ENCODE measurements at regions of chr5 and their contacts with region 1.

Region 1: DNA sequence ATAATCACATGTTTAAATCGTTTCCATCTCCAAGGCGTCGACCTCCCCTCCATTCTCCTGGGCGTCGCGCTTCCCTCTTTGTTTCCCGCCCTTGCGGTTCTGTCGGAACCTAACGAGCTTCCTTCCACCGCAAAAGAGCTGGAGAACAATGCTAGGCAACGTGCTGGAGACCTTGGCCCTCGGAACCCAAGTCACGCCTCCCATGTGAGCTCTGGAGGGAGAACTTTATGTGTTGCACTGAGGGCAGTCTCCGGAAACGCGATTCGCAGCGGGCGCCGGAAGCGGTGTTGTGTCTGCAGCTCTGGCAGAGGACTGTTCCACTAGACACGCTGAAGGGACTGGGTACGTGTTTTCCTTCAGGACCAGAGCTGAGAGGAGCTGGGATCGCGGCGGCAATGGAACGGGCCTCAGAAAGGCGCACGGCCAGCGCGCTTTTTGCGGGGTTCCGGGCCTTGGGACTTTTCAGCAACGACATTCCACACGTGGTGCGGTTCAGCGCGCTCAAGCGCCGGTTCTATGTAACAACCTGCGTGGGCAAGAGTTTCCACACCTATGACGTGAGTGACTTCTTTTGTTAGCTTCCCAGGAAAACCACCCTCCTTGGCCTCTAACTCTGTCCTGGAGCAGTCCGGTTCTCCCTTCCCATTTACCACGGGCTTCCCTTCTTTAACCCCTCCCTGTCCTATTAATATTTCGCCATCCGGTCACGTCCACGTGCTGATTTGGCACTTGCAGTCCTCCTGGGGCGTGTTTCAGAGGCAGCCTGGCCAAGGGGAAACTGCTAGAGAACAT is at the start of gene WDR36:
- DNase-seq: peak; percentile 90
- H3K4me3 ChIP-seq: peak within 1 kb of the TSS; percentile 77 to 98 (median 96)
- H3K27ac ChIP-seq: peak within 1 kb of the TSS; percentile 60
- H3K4me1 ChIP-seq: peaks cover 15% of the 10 kb centered on the region
- H3K27me3 ChIP-seq: no peaks in the 10 kb centered on the region
- CTCF ChIP-seq: no peak
- total RNA-seq, gene WDR36: 45.5 to 67.2 TPM

Region 2: DNA sequence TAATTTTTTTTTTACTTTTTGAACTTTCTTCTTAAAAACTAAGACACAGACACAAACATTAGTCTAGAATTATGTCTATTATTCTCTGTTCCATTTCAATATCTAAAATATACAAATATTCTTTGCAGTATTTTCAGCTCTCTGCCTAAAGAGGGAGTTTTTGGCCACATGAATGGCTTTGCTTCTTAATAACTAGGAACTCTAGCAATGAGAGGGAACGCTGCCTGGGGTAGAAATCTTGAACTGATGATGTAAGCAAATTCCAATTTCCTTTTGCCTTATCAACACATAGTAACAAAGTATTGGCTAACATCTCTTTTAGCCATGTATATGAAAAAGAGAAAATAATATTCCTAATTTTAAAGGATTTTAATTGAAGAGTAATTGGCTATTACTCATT is 301.6 kb before region 1 on chr5:
- CTCF ChIA-PET with region 1: no interaction called
- dilution Hi-C with region 1: no loop called
- in situ Hi-C with region 1: no loop called
- intact Hi-C with region 1: loop called (anchors 2 kb)
- DNase-seq: peak; percentile 20
- H3K4me3 ChIP-seq: no peak overlapping the region
- H3K27ac ChIP-seq: no peak overlapping the region
- H3K4me1 ChIP-seq: peaks cover under 1% of the 10 kb centered on the region
- H3K27me3 ChIP-seq: no peaks in the 10 kb centered on the region
- CTCF ChIP-seq: peak in 1 of 2 donors; percentile 52

Region 3: GRCh38 chr5:110899566-110900412 is 192.5 kb before region 1 on chr5:
- CTCF ChIA-PET with region 1: no interaction called
- dilution Hi-C with region 1: no loop called
- in situ Hi-C with region 1: no loop called
- intact Hi-C with region 1: loop called (anchors 2 kb)
- DNase-seq: peak; percentile 65
- H3K4me3 ChIP-seq: no peak overlapping the region
- H3K27ac ChIP-seq: peak overlapping the region; percentile 40
- H3K4me1 ChIP-seq: peaks cover 19% of the 10 kb centered on the region
- H3K27me3 ChIP-seq: no peaks in the 10 kb centered on the region
- CTCF ChIP-seq: no peak

Region 4: DNA sequence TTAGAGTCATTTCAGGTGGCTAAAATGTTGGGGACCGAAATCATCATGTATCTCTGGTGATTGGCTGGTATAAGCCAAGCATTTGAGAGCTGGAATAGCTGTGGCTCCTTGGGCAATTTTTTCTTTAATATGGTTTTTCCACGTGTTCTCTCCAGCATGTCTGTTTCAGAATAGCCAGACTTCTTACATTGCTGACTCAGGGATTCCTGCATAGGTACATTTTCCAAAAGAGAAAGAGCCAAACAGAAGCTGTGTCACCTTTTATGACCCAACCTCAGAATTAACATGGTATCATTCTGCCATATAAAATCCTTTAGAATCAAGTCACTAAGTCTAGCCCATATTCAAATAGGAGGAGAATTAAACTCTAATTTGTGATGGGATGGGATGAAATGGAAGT is 95.5 kb before region 1 on chr5:
- CTCF ChIA-PET with region 1: no interaction called
- dilution Hi-C with region 1: no loop called
- in situ Hi-C with region 1: no loop called
- intact Hi-C with region 1: no loop called
- DNase-seq: no peak
- H3K4me3 ChIP-seq: no peak overlapping the region
- H3K27ac ChIP-seq: no peak overlapping the region
- H3K4me1 ChIP-seq: no peaks in the 10 kb centered on the region
- H3K27me3 ChIP-seq: no peaks in the 10 kb centered on the region
- CTCF ChIP-seq: no peak

Region 5: DNA sequence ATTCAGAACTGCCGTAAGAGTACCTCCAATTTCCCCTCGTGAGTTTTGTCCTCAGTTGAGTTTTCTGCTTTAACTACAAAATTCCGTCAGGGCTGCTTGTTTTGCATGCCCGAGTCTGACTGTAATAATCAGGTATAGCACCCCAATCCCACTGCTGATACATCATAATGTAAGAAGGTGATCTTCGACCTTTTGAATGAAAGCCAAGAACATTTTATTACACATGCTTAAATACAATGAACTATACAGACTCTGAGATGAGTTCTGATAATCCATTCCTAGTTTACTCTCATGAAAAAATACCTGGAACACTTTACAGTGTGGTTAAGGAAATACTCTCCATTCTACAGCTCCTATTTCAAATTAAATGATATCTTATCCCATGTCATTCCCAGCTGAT is 70.0 kb before region 1 on chr5:
- CTCF ChIA-PET with region 1: no interaction called
- dilution Hi-C with region 1: no loop called
- in situ Hi-C with region 1: no loop called
- intact Hi-C with region 1: no loop called
- DNase-seq: no peak
- H3K4me3 ChIP-seq: no peak overlapping the region
- H3K27ac ChIP-seq: no peak overlapping the region
- H3K4me1 ChIP-seq: no peaks in the 10 kb centered on the region
- H3K27me3 ChIP-seq: peaks cover 2% of the 10 kb centered on the region
- CTCF ChIP-seq: no peak

Region 6: DNA sequence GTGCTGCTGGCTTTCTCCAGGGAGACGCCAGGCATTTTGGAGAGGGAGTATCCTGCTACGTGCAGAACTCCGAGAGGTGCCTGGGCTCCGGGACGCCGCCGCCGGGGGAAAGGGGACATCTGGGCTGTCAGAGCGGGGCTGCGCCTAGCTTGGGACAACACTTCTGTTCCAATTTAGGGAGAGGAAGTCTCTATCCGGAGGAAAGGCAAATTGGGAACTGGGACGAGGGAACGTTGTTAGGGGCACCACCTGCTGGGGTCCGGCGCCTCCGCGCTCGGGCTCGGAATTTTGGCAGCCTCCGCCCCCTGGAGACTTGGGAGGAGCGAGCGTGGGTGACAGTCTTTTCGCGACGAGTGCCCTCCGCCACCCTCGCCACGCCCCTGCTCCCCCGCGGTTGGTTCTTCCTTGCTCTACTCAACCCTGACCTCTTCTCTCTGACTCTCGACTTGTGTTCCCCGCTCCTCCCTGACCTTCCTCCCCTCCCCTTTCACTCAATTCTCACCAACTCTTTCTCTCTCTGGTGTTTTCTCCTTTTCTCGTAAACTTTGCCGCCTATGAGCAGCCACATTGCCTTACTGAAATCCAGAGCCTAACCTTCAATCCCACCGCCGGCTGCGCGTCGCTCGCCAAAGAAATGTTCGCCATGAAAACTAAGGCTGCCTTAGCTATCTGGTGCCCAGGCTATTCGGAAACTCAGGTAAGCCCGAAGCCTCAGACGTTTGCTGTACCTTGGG is 19.1 kb before region 1 on chr5:
- CTCF ChIA-PET with region 1: no interaction called
- dilution Hi-C with region 1: no loop called
- in situ Hi-C with region 1: no loop called
- intact Hi-C with region 1: loop called (anchors 1 kb)
- DNase-seq: peak; percentile 41
- H3K4me3 ChIP-seq: peak overlapping the region; percentile 64 to 93 (median 66)
- H3K27ac ChIP-seq: no peak overlapping the region
- H3K4me1 ChIP-seq: peaks cover 22% of the 10 kb centered on the region
- H3K27me3 ChIP-seq: peaks cover 4% of the 10 kb centered on the region
- CTCF ChIP-seq: peak in 1 of 2 donors; percentile 29

Region 7: GRCh38 chr5:111107371-111107770 is 15.1 kb after region 1 on chr5:
- CTCF ChIA-PET with region 1: no interaction called
- dilution Hi-C with region 1: no loop called
- in situ Hi-C with region 1: no loop called
- intact Hi-C with region 1: no loop called
- DNase-seq: no peak
- H3K4me3 ChIP-seq: no peak overlapping the region
- H3K27ac ChIP-seq: no peak overlapping the region
- H3K4me1 ChIP-seq: no peaks in the 10 kb centered on the region
- H3K27me3 ChIP-seq: no peaks in the 10 kb centered on the region
- CTCF ChIP-seq: no peak

Region 8: GRCh38 chr5:111127453-111128195 is 35.4 kb after region 1 on chr5:
- CTCF ChIA-PET with region 1: no interaction called
- dilution Hi-C with region 1: no loop called
- in situ Hi-C with region 1: no loop called
- intact Hi-C with region 1: loop called (anchors 2 kb)
- DNase-seq: peak; percentile 83
- H3K4me3 ChIP-seq: no peak overlapping the region
- H3K27ac ChIP-seq: peak overlapping the region; percentile 71
- H3K4me1 ChIP-seq: peaks cover 22% of the 10 kb centered on the region
- H3K27me3 ChIP-seq: no peaks in the 10 kb centered on the region
- CTCF ChIP-seq: no peak

Measured in mammary epithelial cell (primary cell).